HEK293T (cell line): ENCODE measurements at regions of chr11 and their contacts with region 1.

Region 1: DNA sequence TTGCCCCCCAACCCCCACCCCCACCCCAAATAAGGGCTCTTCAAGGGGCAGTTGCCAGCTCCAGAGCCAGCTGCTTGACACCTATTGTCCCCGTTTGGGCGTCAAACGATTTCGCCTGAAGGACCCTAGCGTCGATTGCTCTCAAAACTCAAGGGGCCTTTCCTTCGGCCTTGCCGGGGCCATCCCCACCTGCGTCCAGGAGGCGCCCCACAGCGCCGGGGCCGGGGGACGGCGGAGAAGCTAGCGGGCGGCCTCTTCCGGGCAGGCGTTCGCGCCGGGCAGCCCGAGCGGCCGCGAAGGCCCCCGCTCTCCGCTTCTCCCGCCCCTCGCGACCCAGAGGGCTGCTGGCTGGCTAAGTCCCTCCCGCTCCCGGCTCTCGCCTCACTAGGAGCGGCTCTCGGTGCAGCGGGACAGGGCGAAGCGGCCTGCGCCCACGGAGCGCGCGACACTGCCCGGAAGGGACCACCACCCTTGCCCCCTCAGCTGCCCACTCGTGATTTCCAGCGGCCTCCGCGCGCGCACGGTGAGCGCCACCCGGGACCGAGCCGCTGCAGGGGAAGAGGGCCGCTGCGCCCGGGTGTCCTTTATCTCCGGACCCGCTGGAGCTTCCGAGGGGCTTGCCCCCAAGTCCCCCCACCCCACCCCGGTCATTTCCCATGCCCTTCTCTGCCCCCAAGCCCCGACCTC is at the start of gene CAPRIN1:
- DNase-seq: peak; percentile 89

Region 2: DNA sequence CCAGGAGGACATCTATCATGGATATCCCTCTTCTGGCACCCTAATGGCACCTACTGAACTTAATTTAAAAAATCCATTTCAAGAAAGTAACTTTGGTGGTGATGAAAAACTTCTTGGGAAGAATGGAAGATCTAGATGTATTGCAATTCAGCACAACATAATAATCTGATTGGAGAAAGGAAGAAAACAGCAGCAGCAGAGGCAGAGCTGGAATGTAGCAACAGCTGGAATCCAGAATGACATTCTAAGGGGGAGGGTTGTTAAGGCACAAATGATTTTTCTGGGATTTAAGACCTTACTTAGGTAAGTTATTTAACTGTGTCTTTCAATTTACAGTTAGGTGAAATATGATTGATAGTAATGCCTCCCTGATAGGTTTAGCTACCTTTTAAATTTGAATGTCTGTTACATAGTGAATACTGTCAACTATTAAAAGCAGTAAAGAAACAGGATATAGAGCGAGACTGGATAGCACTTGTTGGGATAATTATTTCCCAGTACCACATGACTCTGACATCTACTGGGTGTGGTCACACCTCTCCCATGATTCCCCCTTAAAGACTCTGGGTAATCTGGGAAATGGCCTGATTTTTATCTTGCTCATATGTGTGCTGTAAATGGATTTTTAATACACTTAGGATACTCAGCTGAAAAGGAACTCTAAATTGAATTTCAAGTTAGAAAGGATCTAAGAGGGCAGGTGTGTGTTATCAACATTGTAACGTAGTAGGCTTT is 11.7 kb after region 1 on chr11:
- CTCF ChIA-PET with region 1: no interaction called
- POLR2A ChIA-PET with region 1: interaction called, 16 read pairs
- DNase-seq: no peak

Region 3: GRCh38 chr11:34105079-34105956 is 53.8 kb after region 1 on chr11 and contains the start of gene NAT10:
- CTCF ChIA-PET with region 1: no interaction called
- POLR2A ChIA-PET with region 1: interaction called, 14 read pairs
- DNase-seq: peak; percentile 94